CD8-positive, alpha-beta T cell (primary cell): ENCODE measurements at regions of chr1 and their contacts with region 1.

Region 1: DNA sequence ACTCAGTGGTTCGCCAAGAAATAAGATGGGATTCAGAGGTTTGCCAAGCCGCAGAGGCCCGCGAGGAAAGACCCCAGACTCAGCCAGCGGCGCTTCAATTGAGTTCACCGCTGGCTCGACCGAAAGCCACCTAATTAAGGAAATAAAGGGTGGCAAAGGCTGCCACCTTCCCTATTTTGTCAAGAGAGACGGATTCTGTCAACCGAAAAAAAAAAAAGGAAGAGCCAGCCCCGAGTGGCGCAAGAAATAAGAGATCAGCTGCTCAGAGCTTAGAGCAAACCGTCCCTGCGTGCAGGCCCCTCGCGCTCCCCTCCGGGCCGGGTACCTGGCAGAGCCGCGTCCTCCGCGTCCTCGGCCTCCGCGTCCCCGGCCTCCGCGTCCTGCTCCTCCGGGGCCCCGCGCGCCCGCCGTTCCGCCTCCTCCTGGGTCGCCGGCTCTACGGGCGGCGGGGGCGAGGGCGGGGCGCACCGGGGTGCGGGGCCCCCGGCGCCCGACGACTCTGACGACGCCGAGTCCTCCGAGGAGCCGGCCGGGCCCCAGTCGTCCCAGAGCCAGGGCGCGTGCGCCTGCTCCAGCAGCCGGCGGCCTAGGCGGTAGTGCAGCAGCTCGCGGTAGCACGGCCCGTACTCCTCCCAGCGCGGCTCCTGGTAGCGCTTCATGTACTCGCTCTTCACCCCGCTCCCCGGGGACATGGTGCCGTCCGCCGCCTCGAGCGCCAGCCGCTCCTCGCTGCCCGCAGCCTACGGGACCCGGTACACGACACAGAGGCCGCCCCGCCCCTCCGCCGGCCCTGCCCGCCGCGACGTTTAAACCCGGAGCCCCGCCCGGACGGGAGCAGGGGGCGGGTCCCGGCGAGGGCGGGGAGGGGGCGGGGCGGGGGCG is 832 bp downstream of the CCSAP start:
- DNase-seq: peak; percentile 61 to 90 (median 82)
- ATAC-seq: peak; percentile 80
- H3K4me3 ChIP-seq: peak overlapping the region; percentile 65 to 74
- H3K4me3 Mint-ChIP-seq: peak overlapping the region; percentile 92
- H3K27ac ChIP-seq: peak overlapping the region; percentile 48 to 83
- H3K27ac Mint-ChIP-seq: peak overlapping the region; percentile 87
- H3K4me1 ChIP-seq: peaks cover 18% of the 10 kb centered on the region
- H3K4me1 Mint-ChIP-seq: peaks cover 40% of the 10 kb centered on the region
- H3K27me3 ChIP-seq: no peaks in the 10 kb centered on the region
- H3K27me3 Mint-ChIP-seq: no peaks in the 10 kb centered on the region
- CTCF ChIP-seq: no peak

Region 2: GRCh38 chr1:228486596-228487335 is 855.2 kb before region 1 on chr1:
- CTCF ChIA-PET with region 1: no interaction called
- POLR2A ChIA-PET with region 1: no interaction called
- intact Hi-C with region 1: loop called (anchors 5 to 10 kb)
- DNase-seq: peak; percentile 66 to 94 (median 77)
- ATAC-seq: peak; percentile 75
- H3K4me3 ChIP-seq: peak overlapping the region; percentile 88 to 90
- H3K4me3 Mint-ChIP-seq: peak overlapping the region; percentile 98
- H3K27ac ChIP-seq: peak overlapping the region; percentile 100
- H3K27ac Mint-ChIP-seq: peak overlapping the region; percentile 100
- H3K4me1 ChIP-seq: peaks cover 31% of the 10 kb centered on the region
- H3K4me1 Mint-ChIP-seq: peaks cover 37% of the 10 kb centered on the region
- H3K27me3 ChIP-seq: no peaks in the 10 kb centered on the region
- H3K27me3 Mint-ChIP-seq: no peaks in the 10 kb centered on the region
- CTCF ChIP-seq: no peak

Region 3: GRCh38 chr1:229270547-229271447 is 71.2 kb before region 1 on chr1 and contains the start of gene RAB4A:
- CTCF ChIA-PET with region 1: interaction called, 3 read pairs
- POLR2A ChIA-PET with region 1: interaction called, 5 read pairs
- intact Hi-C with region 1: loop called (anchors 1 kb)
- DNase-seq: peak; percentile 44 to 90 (median 71)
- ATAC-seq: peak; percentile 86
- H3K4me3 ChIP-seq: peak within 1 kb of the TSS; percentile 70 to 84
- H3K4me3 Mint-ChIP-seq: peak within 1 kb of the TSS; percentile 98
- H3K27ac ChIP-seq: peak within 1 kb of the TSS; percentile 45 to 57
- H3K27ac Mint-ChIP-seq: peak within 1 kb of the TSS; percentile 83
- H3K4me1 ChIP-seq: peaks cover 31% of the 10 kb centered on the region
- H3K4me1 Mint-ChIP-seq: peaks cover 37% of the 10 kb centered on the region
- H3K27me3 ChIP-seq: no peaks in the 10 kb centered on the region
- H3K27me3 Mint-ChIP-seq: no peaks in the 10 kb centered on the region
- CTCF ChIP-seq: no peak
- total RNA-seq, gene RAB4A: 26.7 to 29.7 TPM

Region 4: DNA sequence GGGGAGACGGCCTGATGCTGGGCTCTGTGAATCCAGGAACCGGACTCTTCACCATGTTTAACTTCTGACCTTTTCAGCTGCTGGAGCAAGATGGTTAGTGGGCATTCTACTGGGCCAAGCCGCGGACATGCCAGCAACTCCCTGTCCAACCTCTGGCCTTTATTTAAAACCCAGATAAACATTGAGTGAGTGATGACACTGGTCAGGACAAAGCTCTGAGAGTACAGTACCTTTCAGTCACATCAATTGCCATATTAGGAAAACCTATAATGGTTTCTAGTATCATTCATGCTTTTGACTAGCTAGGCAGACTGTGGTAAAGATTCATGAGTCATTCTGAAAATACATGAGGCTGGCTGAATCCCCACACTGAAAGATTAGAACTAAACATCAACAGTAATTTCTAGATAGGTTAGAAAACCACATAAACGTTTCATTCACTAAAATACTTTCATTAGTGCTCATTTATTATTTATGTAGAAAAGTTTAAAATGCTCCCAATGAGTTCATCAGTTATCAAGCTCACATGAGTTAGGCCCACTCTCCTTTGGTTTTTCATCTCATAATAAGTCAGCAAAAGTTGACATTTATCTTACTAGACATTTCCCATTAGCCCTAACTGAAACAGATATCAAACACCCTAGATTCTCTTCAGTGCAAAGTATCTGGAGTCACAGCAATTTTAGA is 99.0 kb after region 1 on chr1:
- CTCF ChIA-PET with region 1: no interaction called
- POLR2A ChIA-PET with region 1: no interaction called
- intact Hi-C with region 1: loop called in 1 of 2 experiments (anchors 10 kb)
- DNase-seq: no peak
- ATAC-seq: no peak
- H3K4me3 ChIP-seq: no peak overlapping the region
- H3K4me3 Mint-ChIP-seq: no peak overlapping the region
- H3K27ac ChIP-seq: no peak overlapping the region
- H3K27ac Mint-ChIP-seq: no peak overlapping the region
- H3K4me1 ChIP-seq: no peaks in the 10 kb centered on the region
- H3K4me1 Mint-ChIP-seq: no peaks in the 10 kb centered on the region
- H3K27me3 ChIP-seq: no peaks in the 10 kb centered on the region
- H3K27me3 Mint-ChIP-seq: peaks cover 2% of the 10 kb centered on the region
- CTCF ChIP-seq: no peak

Region 5: DNA sequence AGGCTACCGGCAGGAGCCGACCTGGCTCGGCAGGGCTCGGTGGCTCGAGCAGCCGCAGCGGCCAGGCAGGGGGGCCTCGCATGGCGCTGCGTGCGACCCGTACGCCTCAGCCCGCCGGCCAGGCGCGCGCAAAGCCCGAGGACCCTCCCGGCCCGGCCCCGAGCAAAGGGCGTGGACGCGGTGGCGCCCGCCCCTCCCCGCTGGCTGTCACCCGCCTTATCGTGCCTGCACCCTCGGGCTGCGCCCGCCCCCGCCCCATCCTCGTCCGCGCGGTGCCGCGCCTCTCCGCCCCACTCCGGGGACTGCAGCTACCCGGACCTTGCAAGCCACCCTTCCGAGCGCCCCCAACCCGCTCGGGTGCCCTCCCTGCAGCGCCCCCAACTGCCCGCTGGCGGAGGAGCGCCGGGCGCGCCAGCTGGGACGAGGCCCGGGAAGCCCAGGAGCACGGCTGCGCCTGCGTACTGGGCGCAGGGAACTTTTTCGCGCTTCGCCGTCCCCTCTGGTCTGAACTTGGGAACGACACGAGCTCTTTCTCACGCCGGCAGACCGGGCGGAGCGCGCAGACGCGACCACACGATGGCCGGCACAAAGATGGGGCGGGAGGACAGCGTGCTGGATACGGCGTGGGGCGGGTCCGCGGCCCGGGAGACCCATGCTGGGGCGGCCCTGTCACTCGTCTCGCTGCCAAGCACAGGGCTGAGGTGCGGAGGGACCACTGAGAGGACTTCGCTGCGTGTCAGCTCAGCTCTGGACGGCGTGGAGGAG is 216.7 kb after region 1 on chr1 and contains the start of gene ABCB10:
- CTCF ChIA-PET with region 1: no interaction called
- POLR2A ChIA-PET with region 1: interaction called, 4 read pairs
- intact Hi-C with region 1: loop called in 1 of 2 experiments (anchors 2 kb)
- DNase-seq: peak; percentile 56 to 93 (median 81)
- ATAC-seq: peak; percentile 81
- H3K4me3 ChIP-seq: peak within 1 kb of the TSS; percentile 74 to 82
- H3K4me3 Mint-ChIP-seq: peak within 1 kb of the TSS; percentile 95
- H3K27ac ChIP-seq: peak within 1 kb of the TSS; percentile 52 to 70
- H3K27ac Mint-ChIP-seq: peak within 1 kb of the TSS; percentile 90
- H3K4me1 ChIP-seq: peaks cover 18% of the 10 kb centered on the region
- H3K4me1 Mint-ChIP-seq: peaks cover 37% of the 10 kb centered on the region
- H3K27me3 ChIP-seq: no peaks in the 10 kb centered on the region
- H3K27me3 Mint-ChIP-seq: no peaks in the 10 kb centered on the region
- CTCF ChIP-seq: peak; percentile 30
- total RNA-seq, gene ABCB10: 6.1 to 7.6 TPM

Region 6: DNA sequence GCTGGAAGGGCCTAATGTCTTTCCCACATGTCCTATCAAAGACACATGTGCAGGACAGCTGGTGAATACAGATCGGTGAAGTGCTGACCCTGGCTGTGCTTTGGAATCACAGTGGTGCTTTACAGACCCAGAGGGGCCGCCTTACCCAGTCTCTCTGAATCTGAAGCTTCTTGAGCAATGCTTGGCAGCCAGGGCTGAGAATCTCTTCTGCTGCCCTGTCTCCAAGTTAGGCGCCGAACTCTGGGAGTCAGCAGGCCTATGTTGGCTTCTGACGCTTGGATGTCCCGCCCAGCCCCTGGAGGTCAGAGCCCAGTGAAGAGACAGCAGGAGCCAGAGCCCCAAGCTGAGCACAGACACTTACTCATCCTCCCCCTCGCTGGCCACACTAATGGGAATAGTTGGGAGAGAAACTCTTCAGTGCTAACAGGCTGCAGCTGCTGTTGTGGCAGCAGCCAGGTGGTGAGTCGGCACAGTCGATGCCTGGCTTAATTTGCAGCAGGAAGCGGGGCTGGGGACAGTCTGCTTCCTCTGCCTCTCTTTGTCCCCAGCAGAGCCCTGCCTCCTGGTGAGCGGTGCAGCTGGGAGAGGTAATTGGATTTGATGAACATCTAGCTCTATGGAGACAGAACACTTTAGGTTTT is 352.2 kb after region 1 on chr1:
- CTCF ChIA-PET with region 1: no interaction called
- POLR2A ChIA-PET with region 1: no interaction called
- intact Hi-C with region 1: no loop called
- DNase-seq: no peak
- ATAC-seq: no peak
- H3K4me3 ChIP-seq: no peak overlapping the region
- H3K4me3 Mint-ChIP-seq: no peak overlapping the region
- H3K27ac ChIP-seq: no peak overlapping the region
- H3K27ac Mint-ChIP-seq: no peak overlapping the region
- H3K4me1 ChIP-seq: no peaks in the 10 kb centered on the region
- H3K4me1 Mint-ChIP-seq: peaks cover 29% of the 10 kb centered on the region
- H3K27me3 ChIP-seq: no peaks in the 10 kb centered on the region
- H3K27me3 Mint-ChIP-seq: peaks cover 2% of the 10 kb centered on the region
- CTCF ChIP-seq: no peak